Tibial artery (tissue), 4 donors: ENCODE measurements at regions of chr15 and their contacts with region 1.

Region 1: DNA sequence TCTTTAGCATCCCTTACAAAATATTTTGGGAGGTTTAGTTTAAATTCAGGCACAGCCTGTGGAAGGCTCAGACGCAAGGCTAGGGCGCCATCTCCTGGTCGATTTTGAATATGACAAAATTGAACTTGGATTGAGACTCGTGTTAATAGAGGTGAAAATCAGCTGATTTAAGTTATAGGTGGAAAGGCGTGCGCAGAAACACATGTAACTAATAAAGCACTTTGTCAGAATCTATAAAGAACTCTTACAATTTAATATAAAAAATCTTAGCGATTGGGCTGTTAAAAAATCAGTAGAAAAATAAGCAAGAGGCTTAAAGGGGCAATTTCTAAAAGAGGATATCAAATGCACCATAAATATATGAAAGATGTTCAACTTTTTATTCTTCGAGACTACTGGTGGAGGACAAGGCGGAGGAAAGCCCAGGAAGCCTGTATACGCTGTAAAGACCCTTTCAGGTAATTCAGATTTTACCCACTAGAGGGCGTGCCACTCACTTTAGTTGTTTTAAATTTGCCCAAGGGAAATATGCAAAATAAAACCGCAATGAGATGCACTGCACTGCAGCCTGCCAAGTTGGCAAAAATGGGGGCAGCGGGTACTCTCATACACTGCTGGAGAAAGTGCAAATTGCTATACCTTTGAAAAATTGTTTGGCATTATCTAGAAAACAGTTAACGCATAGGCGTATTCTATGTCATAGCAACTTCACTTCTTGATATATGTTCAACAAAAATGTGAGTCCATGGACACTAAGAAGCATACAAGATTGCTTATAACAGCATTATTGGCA is 64.7 kb downstream of the SLC30A4 start:
- DNase-seq: peak in 1 of 2 donors; percentile 51
- H3K4me3 ChIP-seq: peak overlapping the region; percentile 45 to 55
- H3K27ac ChIP-seq: peak overlapping the region; percentile 67 to 74
- H3K4me1 ChIP-seq: peaks cover 0 to 18% (median 0%) of the 10 kb centered on the region in 4 donors
- H3K27me3 ChIP-seq: no peaks in the 10 kb centered on the region
- CTCF ChIP-seq: peak; percentile 74 to 76

Region 2: DNA sequence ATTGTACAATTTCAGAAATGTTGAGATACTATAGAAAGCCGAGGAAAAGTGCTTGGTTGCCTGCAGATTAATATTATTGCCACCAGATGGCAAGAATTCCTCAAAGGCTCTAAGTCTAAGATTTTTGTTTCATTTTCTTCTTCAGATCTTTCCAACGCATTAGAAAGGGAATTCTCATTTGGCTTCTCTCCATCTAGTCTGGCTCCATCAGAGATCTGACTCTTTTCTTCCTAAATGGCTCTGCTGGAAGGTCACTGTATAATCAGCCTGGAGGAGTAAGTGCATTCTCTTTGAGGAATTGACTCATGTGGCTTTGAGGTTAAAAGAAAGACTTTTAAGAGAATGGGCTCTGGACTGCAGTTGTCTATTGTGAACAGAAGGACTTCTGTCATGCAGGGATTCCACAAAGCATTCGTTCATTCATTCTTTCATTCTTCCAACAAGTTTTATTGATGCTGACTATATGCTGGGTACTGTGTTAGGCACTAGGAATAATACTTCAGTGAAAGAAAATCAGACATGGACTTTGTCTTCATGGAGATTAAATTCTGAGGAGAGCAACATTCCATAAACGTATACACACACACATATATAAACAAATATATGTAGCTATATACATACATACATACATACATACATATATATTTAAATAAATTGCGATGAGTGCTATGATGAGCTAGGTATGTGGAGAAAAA is 150.5 kb before region 1 on chr15:
- intact Hi-C with region 1: loop called (anchors 10 kb)
- DNase-seq: no peak
- H3K4me3 ChIP-seq: peak overlapping the region; percentile 26 to 39
- H3K27ac ChIP-seq: peak overlapping the region in 1 of 2 donors; percentile 44
- H3K4me1 ChIP-seq: peaks cover 0 to 10% (median 5%) of the 10 kb centered on the region in 4 donors
- H3K27me3 ChIP-seq: no peaks in the 10 kb centered on the region
- CTCF ChIP-seq: peak; percentile 60 to 66

Region 3: GRCh38 chr15:45573961-45574629 is 116.3 kb after region 1 on chr15:
- intact Hi-C with region 1: no loop called
- DNase-seq: no peak
- H3K4me3 ChIP-seq: no peak overlapping the region
- H3K27ac ChIP-seq: no peak overlapping the region
- H3K4me1 ChIP-seq: no peaks in the 10 kb centered on the region
- H3K27me3 ChIP-seq: peaks cover 0 to 7% of the 10 kb centered on the region in 2 donors
- CTCF ChIP-seq: no peak

Region 4: GRCh38 chr15:45611305-45611704 is 153.5 kb after region 1 on chr15:
- intact Hi-C with region 1: loop called (anchors 2 kb)
- DNase-seq: no peak
- H3K4me3 ChIP-seq: no peak overlapping the region
- H3K27ac ChIP-seq: no peak overlapping the region
- H3K4me1 ChIP-seq: peaks cover 0 to 3% (median 0%) of the 10 kb centered on the region in 4 donors
- H3K27me3 ChIP-seq: no peaks in the 10 kb centered on the region
- CTCF ChIP-seq: no peak